CD8-positive, alpha-beta memory T cell (primary cell): ENCODE measurements at regions of chr10 and their contacts with region 1.

Region 1: GRCh38 chr10:50624866-50625692 is 1.3 kb upstream of the SGMS1 start:
- DNase-seq: peak; percentile 53 to 80 (median 68)
- H3K4me3 ChIP-seq: peak overlapping the region; percentile 99
- H3K4me3 Mint-ChIP-seq: peak overlapping the region; percentile 90 to 98 (median 94)
- H3K27ac ChIP-seq: peak overlapping the region; percentile 100
- H3K27ac Mint-ChIP-seq: peak overlapping the region; percentile 93 to 100 (median 97)
- H3K4me1 ChIP-seq: peaks cover 25% of the 10 kb centered on the region
- H3K4me1 Mint-ChIP-seq: peaks cover 29 to 33% (median 30%) of the 10 kb centered on the region in 3 donors
- H3K27me3 ChIP-seq: no peaks in the 10 kb centered on the region
- H3K27me3 Mint-ChIP-seq: peaks cover 0 to 5% of the 10 kb centered on the region in 2 donors

Region 2: DNA sequence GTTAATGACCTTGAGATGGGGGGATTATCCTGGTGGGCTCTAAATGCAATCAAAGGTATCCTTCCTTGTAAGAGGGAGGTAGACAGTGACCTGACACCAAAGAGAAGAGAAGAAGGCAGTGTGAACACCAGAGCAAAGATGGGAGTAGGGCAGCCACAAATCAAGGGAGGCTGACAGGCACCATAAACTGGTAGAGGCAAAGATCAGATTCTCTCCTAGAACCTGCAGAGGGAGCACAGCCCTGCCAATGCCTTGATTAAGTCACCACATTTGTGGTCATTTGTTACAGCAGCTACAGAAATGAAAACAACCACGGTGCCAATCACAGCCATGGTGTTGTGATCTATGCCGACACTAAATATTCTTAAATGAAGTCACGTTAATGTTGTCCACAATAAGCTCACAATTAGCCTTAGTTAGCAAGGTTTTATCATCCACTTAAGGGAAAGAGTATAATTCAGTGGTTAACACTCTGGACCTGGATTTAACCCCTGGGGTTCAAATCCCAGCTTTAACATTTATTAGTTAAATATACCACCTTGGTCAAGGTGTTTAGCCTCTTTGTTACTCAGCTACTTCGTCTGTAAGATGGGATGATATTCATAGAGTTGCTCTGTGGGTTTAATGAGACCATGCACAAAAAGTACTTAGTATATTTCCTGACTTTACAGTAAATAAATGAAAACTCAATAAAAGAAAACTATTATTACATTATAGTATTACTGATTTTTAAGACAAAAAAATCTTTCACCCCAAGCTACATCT is 72.1 kb before region 1 on chr10:
- CTCF ChIA-PET with region 1: interaction called, 12 read pairs
- POLR2A ChIA-PET with region 1: interaction called, 6 read pairs
- DNase-seq: peak; percentile 20 to 65 (median 29)
- H3K4me3 ChIP-seq: no peak overlapping the region
- H3K4me3 Mint-ChIP-seq: peak overlapping the region in 2 of 7 donors; percentile 1 to 4
- H3K27ac ChIP-seq: no peak overlapping the region
- H3K27ac Mint-ChIP-seq: peak overlapping the region in 1 of 8 donors; percentile 65
- H3K4me1 ChIP-seq: peaks cover 3% of the 10 kb centered on the region
- H3K4me1 Mint-ChIP-seq: peaks cover 29 to 55% (median 48%) of the 10 kb centered on the region in 3 donors
- H3K27me3 ChIP-seq: no peaks in the 10 kb centered on the region
- H3K27me3 Mint-ChIP-seq: no peaks in the 10 kb centered on the region

Region 3: DNA sequence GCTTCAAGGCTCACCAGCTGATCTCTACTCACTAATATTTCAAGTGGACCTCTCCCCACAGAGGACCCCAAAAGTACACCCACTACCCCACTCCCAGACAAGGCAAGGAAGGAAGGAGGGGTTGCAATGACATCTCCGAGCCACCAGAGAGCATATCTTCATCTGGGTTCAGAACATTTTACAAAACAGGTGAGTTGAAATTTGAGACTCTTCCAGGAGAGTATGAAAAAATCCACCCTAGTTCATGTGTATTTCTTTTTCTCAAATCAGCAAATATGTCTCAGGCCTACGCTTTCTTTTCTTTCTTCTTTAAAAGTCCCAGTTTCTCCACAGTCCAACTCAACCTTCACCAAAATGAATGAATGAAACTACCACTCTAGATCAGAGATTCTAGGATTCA is 63.3 kb before region 1 on chr10:
- CTCF ChIA-PET with region 1: interaction called, 10 read pairs
- POLR2A ChIA-PET with region 1: no interaction called
- DNase-seq: peak in 1 of 5 donors; percentile 12
- H3K4me3 ChIP-seq: no peak overlapping the region
- H3K4me3 Mint-ChIP-seq: no peak overlapping the region
- H3K27ac ChIP-seq: no peak overlapping the region
- H3K27ac Mint-ChIP-seq: peak overlapping the region in 3 of 8 donors; percentile 8 to 80 (median 27)
- H3K4me1 ChIP-seq: no peaks in the 10 kb centered on the region
- H3K4me1 Mint-ChIP-seq: peaks cover 24 to 41% (median 31%) of the 10 kb centered on the region in 3 donors
- H3K27me3 ChIP-seq: no peaks in the 10 kb centered on the region
- H3K27me3 Mint-ChIP-seq: no peaks in the 10 kb centered on the region

Region 4: DNA sequence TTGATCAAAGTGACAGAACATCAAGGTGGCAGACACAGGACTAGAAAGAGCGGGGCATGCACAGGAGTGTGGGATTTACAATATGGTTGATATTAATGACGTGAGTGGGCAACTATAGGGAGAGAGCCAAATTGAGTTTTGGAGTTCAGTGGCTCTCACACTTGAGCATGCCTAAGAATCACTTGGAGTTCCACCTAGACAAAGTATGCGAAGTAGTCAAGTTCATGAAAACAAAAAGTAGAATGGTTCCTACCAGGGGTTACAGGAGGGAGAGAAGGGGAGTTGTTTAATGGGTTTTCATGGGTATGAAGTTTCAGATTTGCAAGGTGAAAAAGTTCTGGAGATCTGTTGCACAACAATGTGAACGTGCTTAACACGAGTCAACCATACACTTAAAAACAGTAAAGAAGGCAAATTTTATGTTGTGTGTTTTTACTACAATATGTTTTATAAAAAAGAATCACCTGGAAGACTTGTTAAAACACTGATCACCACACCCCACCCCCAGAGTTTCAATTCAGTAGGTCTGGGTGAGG is 44.5 kb before region 1 on chr10:
- CTCF ChIA-PET with region 1: no interaction called
- POLR2A ChIA-PET with region 1: no interaction called
- DNase-seq: no peak
- H3K4me3 ChIP-seq: no peak overlapping the region
- H3K4me3 Mint-ChIP-seq: peak overlapping the region in 2 of 7 donors; percentile 3 to 32
- H3K27ac ChIP-seq: no peak overlapping the region
- H3K27ac Mint-ChIP-seq: peak overlapping the region in 6 of 8 donors; percentile 0 to 85 (median 44)
- H3K4me1 ChIP-seq: peaks cover 11% of the 10 kb centered on the region
- H3K4me1 Mint-ChIP-seq: peaks cover 67 to 92% (median 83%) of the 10 kb centered on the region in 3 donors
- H3K27me3 ChIP-seq: no peaks in the 10 kb centered on the region
- H3K27me3 Mint-ChIP-seq: peaks cover 0 to 2% of the 10 kb centered on the region in 2 donors

Region 5: GRCh38 chr10:50613150-50613549 is 11.9 kb before region 1 on chr10:
- CTCF ChIA-PET with region 1: interaction called, 13 read pairs
- POLR2A ChIA-PET with region 1: no interaction called
- DNase-seq: no peak
- H3K4me3 ChIP-seq: no peak overlapping the region
- H3K4me3 Mint-ChIP-seq: no peak overlapping the region
- H3K27ac ChIP-seq: no peak overlapping the region
- H3K27ac Mint-ChIP-seq: peak overlapping the region in 2 of 8 donors; percentile 6 to 60
- H3K4me1 ChIP-seq: peaks cover 21% of the 10 kb centered on the region
- H3K4me1 Mint-ChIP-seq: peaks cover 36 to 80% (median 64%) of the 10 kb centered on the region in 3 donors
- H3K27me3 ChIP-seq: no peaks in the 10 kb centered on the region
- H3K27me3 Mint-ChIP-seq: no peaks in the 10 kb centered on the region

Region 6: GRCh38 chr10:50636618-50637579 is 11.8 kb after region 1 on chr10:
- CTCF ChIA-PET with region 1: interaction called, 22 read pairs
- POLR2A ChIA-PET with region 1: interaction called, 53 read pairs
- DNase-seq: peak in 2 of 5 donors; percentile 52 to 70
- H3K4me3 ChIP-seq: peak overlapping the region; percentile 2
- H3K4me3 Mint-ChIP-seq: peak overlapping the region; percentile 25 to 87 (median 76)
- H3K27ac ChIP-seq: no peak overlapping the region
- H3K27ac Mint-ChIP-seq: peak overlapping the region in 7 of 8 donors; percentile 20 to 84 (median 56)
- H3K4me1 ChIP-seq: peaks cover 25% of the 10 kb centered on the region
- H3K4me1 Mint-ChIP-seq: peaks cover 32 to 50% (median 42%) of the 10 kb centered on the region in 3 donors
- H3K27me3 ChIP-seq: no peaks in the 10 kb centered on the region
- H3K27me3 Mint-ChIP-seq: no peaks in the 10 kb centered on the region

Region 7: GRCh38 chr10:50653758-50654157 is 28.7 kb after region 1 on chr10:
- CTCF ChIA-PET with region 1: interaction called, 12 read pairs
- POLR2A ChIA-PET with region 1: interaction called, 3 read pairs
- DNase-seq: no peak
- H3K4me3 ChIP-seq: no peak overlapping the region
- H3K4me3 Mint-ChIP-seq: no peak overlapping the region
- H3K27ac ChIP-seq: no peak overlapping the region
- H3K27ac Mint-ChIP-seq: peak overlapping the region in 2 of 8 donors; percentile 43 to 65
- H3K4me1 ChIP-seq: peaks cover 13% of the 10 kb centered on the region
- H3K4me1 Mint-ChIP-seq: peaks cover 12 to 25% (median 20%) of the 10 kb centered on the region in 3 donors
- H3K27me3 ChIP-seq: no peaks in the 10 kb centered on the region
- H3K27me3 Mint-ChIP-seq: no peaks in the 10 kb centered on the region